Caco-2 (cell line): ENCODE measurements at regions of chr11 and their contacts with region 1.

Region 1: GRCh38 chr11:69642913-69643632 is 2.1 kb downstream of the CCND1 start:
- DNase-seq: peak; percentile 85 to 95
- H3K4me3 ChIP-seq: peak overlapping the region; percentile 73
- H3K4me3 Mint-ChIP-seq: peak overlapping the region; percentile 96
- H3K27ac Mint-ChIP-seq: peak overlapping the region; percentile 45
- H3K4me1 ChIP-seq: peaks cover 10% of the 10 kb centered on the region
- H3K4me1 Mint-ChIP-seq: peaks cover 13% of the 10 kb centered on the region
- H3K27me3 ChIP-seq: no peaks in the 10 kb centered on the region
- H3K27me3 Mint-ChIP-seq: no peaks in the 10 kb centered on the region
- CTCF ChIP-seq: peak; percentile 96 to 99

Region 2: GRCh38 chr11:69122642-69123431 is 520.2 kb before region 1 on chr11:
- CTCF ChIA-PET with region 1: no interaction called
- POLR2A ChIA-PET with region 1: no interaction called
- intact Hi-C with region 1: loop called (anchors 2 kb)
- DNase-seq: peak; percentile 98 to 100
- H3K4me3 ChIP-seq: peak overlapping the region; percentile 6
- H3K4me3 Mint-ChIP-seq: peak overlapping the region; percentile 76
- H3K27ac Mint-ChIP-seq: peak overlapping the region; percentile 97
- H3K4me1 ChIP-seq: peaks cover 35% of the 10 kb centered on the region
- H3K4me1 Mint-ChIP-seq: peaks cover 40% of the 10 kb centered on the region
- H3K27me3 ChIP-seq: no peaks in the 10 kb centered on the region
- H3K27me3 Mint-ChIP-seq: no peaks in the 10 kb centered on the region
- CTCF ChIP-seq: no peak

Region 3: DNA sequence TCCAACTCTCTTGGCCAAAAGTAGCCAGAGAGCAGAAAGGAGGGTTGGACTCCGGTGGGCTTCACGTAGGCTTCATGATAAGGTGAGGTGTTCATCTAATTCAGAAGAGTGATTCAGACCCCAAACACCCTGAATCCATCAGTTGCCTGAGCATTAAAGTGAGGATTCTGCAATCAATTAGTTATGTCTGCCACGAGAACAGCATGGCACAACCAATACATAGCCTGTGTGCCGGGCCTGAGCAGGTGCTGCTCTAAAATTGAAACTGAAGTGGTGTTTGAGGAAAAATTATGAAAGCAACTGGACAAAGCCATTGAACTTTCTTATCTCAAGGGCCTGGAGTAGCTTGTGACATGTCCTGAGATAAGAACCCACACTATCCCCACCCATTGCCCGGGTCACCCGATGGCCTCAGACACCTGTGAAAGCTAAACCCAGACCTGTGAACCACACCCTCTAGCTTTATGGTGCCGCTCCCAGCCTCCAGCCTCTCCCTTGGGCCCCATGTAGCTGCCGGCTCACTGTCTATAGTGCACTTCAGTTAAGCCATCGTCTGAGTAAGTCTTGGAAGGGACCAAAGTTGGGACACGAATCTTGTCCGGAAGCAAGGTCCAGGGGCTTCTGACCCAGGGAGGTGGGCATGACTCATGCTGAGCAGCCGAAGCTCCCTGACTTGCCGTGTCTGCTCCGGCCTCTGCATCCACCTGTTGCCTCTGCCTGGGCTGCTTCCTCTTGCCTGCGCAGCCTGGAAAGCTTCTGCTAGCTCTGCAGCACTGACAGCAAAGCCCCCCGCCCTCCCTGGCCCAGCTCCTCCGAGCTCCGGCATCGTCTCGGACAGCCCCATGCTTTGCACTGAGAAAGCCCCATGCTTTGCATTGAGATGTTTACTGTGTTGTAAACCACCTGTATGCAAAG is 354.8 kb before region 1 on chr11:
- CTCF ChIA-PET with region 1: interaction called, 3 read pairs
- POLR2A ChIA-PET with region 1: interaction called, 16 read pairs
- intact Hi-C with region 1: loop called (anchors 1 kb)
- DNase-seq: peak; percentile 98 to 99
- H3K4me3 ChIP-seq: peak overlapping the region; percentile 15
- H3K4me3 Mint-ChIP-seq: peak overlapping the region; percentile 65
- H3K27ac Mint-ChIP-seq: peak overlapping the region; percentile 48
- H3K4me1 ChIP-seq: peaks cover 53% of the 10 kb centered on the region
- H3K4me1 Mint-ChIP-seq: peaks cover 37% of the 10 kb centered on the region
- H3K27me3 ChIP-seq: no peaks in the 10 kb centered on the region
- H3K27me3 Mint-ChIP-seq: no peaks in the 10 kb centered on the region
- CTCF ChIP-seq: no peak

Region 4: DNA sequence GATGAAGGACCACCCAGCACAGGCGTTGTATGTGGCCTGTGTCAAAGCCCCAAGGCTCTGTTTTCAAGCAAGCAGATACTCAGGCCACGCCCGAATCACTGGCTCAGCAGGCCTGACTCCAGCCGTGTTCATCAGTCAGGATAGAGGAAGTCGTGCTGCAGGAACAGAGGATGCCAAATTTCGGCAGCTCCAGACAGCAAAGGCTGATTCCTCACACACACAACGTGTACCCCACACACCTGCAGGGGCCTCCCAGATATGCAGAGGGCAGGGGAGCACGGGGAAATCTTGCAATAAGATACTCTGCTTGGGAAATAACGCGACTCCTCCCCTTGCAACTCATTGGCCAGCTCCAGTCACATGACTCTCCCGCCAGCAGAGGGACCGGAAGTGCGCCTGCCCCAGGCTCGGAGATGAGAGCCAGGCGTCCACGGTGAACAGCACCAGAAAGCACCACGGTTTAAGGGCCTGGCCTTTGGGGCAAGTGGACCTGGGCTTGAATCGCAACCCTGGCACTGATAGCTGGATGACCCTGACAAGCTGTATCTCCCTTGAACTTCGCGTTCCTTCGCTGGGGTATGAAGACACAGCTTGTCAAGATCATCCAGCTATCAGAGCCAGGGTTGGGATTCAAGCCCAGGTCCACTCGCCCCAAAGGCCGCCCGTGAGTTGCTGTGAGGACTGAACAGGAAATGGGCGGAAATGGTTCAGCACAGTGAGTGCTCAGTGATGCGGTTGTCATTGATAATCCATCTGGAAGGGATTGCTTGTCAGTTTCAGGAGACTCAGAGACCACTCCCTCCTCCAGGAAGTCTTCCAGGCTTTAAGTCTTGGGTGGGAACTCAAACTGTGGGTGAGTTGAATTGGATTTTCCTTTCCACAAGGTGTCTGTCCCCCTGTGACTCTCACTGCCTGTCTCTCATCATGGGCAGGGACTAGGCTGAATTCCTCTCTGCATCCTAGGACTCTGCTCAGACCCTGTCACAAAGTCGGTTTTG is 260.6 kb before region 1 on chr11:
- CTCF ChIA-PET with region 1: no interaction called
- POLR2A ChIA-PET with region 1: interaction called, 11 read pairs
- intact Hi-C with region 1: loop called (anchors 1 kb)
- DNase-seq: peak; percentile 93 to 94
- H3K4me3 ChIP-seq: peak overlapping the region; percentile 56
- H3K4me3 Mint-ChIP-seq: peak overlapping the region; percentile 82
- H3K27ac Mint-ChIP-seq: peak overlapping the region; percentile 93
- H3K4me1 ChIP-seq: peaks cover 15% of the 10 kb centered on the region
- H3K4me1 Mint-ChIP-seq: peaks cover 15% of the 10 kb centered on the region
- H3K27me3 ChIP-seq: no peaks in the 10 kb centered on the region
- H3K27me3 Mint-ChIP-seq: no peaks in the 10 kb centered on the region
- CTCF ChIP-seq: peak in 1 of 2 experiments; percentile 13

Region 5: DNA sequence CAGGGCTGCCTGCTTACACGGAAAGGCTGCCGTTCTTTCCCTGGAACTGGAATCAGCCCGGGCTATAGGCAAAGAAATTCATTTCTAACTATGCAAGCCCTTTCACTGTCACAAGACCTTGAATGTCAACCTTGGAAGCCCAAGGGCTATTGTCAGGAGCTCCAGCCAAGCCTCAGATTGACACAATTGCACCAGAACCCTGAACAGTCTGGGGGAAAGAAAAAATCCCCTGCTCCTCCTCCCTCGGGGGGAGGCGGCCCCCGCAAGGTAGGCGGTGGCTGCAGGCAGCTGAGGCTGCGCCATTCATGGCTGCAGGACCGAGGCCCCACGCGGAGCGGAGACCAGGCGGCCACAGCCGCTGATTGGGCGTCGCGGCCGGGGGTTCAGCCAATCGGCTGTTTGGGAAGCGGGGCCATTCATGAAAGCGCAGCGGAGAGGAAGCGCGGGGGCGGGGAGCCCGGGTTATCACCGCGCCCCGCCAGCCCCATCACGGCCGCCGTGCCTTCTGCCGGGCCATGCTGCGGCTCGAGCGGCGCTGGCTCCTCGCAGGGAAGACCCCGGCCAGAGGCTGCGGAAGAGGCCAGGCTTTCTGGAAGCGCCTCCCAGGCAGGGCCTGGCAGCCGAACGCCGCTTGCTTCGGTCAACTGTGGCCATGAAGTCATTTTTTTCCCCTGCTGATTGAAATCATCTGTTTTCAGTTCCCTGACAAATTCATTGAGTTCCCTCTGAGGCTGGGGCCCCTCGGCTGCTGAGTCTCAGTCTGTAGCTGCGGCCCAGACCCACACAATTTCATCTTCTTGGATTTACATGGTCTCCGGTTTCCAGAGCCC is 199.7 kb before region 1 on chr11:
- CTCF ChIA-PET with region 1: interaction called, 7 read pairs
- POLR2A ChIA-PET with region 1: interaction called, 17 read pairs
- intact Hi-C with region 1: loop called (anchors 1 kb)
- DNase-seq: peak; percentile 99
- H3K4me3 ChIP-seq: peak overlapping the region; percentile 36
- H3K4me3 Mint-ChIP-seq: peak overlapping the region; percentile 57
- H3K27ac Mint-ChIP-seq: peak overlapping the region; percentile 88
- H3K4me1 ChIP-seq: peaks cover 48% of the 10 kb centered on the region
- H3K4me1 Mint-ChIP-seq: peaks cover 51% of the 10 kb centered on the region
- H3K27me3 ChIP-seq: no peaks in the 10 kb centered on the region
- H3K27me3 Mint-ChIP-seq: no peaks in the 10 kb centered on the region
- CTCF ChIP-seq: no peak

Region 6: GRCh38 chr11:69497221-69497787 is 145.8 kb before region 1 on chr11:
- CTCF ChIA-PET with region 1: interaction called, 5 read pairs
- POLR2A ChIA-PET with region 1: interaction called, 18 read pairs
- intact Hi-C with region 1: loop called (anchors 2 kb)
- DNase-seq: peak; percentile 95 to 97
- H3K4me3 ChIP-seq: no peak overlapping the region
- H3K4me3 Mint-ChIP-seq: peak overlapping the region; percentile 65
- H3K27ac Mint-ChIP-seq: peak overlapping the region; percentile 92
- H3K4me1 ChIP-seq: peaks cover 59% of the 10 kb centered on the region
- H3K4me1 Mint-ChIP-seq: peaks cover 65% of the 10 kb centered on the region
- H3K27me3 ChIP-seq: no peaks in the 10 kb centered on the region
- H3K27me3 Mint-ChIP-seq: no peaks in the 10 kb centered on the region
- CTCF ChIP-seq: no peak